Activated naive CD4-positive, alpha-beta T cell treated with anti-CD3 and anti-CD28 coated beads for 36 hours (primary cell): ENCODE measurements at regions of chr12 and their contacts with region 1.

Region 1: GRCh38 chr12:120649442-120650232 is 9.2 kb downstream of the CABP1 start:
- DNase-seq: no peak
- H3K4me3 Mint-ChIP-seq: peak overlapping the region; percentile 20
- H3K27ac Mint-ChIP-seq: no peak overlapping the region
- H3K4me1 Mint-ChIP-seq: peaks cover 12% of the 10 kb centered on the region
- H3K27me3 Mint-ChIP-seq: peaks cover 41% of the 10 kb centered on the region

Region 2: DNA sequence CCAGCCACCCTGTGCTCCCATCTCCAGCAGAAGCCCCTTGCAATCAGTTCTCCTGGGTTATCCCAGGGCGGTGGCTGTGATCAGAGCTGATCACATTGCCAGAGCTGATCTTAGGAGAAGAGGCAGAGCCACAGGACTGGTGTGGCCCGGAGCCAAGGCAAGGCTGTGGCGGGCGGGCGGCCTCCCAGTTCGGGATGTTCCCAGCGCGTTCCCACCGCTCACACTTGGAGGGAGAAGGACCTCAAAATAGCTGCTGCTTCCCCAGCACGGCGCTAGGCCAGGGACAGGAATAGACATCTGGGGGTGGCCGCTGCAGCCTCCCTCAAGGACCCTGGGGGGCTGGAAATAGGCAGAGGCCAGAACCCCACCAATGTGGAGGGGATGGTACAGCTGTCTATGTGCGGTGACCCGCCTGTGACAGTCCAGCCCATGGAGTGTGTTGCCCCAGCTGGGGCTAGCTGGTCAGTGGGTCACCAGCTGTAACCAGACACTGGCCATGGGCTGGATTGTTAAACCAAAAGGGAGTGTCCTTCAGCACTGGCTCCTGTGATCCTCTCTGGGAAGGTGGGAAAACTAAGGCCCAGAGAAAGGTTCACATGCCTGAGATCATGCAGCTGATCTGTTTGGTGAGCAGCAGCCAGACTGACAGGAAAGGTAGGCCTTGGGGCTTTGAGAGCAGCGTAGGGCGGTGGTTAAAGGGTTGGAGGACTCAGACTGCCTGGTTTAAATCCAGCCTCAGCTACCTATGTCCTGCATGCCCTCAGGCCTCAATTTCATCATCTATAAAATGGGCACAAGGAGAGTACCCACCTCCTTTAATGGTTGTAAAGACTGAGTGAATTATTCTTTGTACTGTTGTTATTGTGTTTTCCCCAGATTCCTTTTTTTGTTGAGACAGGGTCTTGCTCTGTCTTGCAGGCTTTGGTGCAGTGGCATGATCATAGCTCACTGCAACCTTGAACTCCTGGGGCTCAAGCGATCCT is 60.4 kb before region 1 on chr12:
- CTCF ChIA-PET with region 1: interaction called, 129 read pairs
- intact Hi-C with region 1: no loop called
- DNase-seq: no peak
- H3K4me3 Mint-ChIP-seq: no peak overlapping the region
- H3K27ac Mint-ChIP-seq: no peak overlapping the region
- H3K4me1 Mint-ChIP-seq: peaks cover under 1% of the 10 kb centered on the region
- H3K27me3 Mint-ChIP-seq: peaks cover 2% of the 10 kb centered on the region

Region 3: DNA sequence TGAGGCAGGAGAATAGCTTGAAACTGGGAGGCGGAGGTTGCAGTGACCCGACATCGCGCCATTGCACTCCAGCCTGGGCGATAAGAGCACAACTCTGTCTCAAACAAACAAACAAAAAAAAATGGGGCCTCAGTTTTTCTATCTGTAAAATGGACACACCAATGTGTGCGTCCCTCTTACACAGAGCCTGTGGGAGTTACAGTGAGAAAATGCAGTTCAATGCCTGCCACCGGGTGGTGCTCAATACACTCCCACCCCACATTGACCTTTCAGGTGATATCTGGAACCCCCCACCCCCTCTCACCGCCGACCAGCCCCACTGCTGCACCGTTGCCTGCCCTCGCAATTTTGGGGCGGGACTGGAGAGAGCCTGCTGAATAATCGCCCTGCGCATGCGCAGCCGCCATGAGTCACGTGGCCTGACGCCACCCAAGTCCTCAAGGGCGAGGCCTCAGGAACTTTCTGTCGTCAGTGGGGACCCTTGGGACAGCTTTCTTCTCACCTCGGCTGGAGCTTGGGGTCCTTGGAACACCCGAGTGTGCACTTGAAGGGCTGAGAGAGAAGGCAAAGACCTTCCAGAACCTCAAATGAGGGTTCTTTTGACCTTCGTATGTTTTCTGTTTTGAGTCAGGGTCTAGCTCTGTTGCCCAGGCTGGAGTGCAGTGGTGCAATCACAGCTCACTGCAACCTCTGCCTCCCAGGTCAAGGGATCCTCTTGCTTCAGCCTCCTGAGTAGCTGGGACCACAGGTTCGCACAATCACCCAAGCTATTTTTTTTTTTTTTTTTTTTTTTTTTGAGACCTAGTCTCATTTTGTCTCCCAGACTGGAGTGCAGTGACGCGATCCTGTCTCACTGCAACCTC is 23.8 kb before region 1 on chr12:
- CTCF ChIA-PET with region 1: interaction called, 16 read pairs
- intact Hi-C with region 1: no loop called
- DNase-seq: peak; percentile 22
- H3K4me3 Mint-ChIP-seq: no peak overlapping the region
- H3K27ac Mint-ChIP-seq: no peak overlapping the region
- H3K4me1 Mint-ChIP-seq: no peaks in the 10 kb centered on the region
- H3K27me3 Mint-ChIP-seq: peaks cover 5% of the 10 kb centered on the region

Region 4: GRCh38 chr12:120677765-120678473 is 28.3 kb after region 1 on chr12:
- CTCF ChIA-PET with region 1: interaction called, 19 read pairs
- intact Hi-C with region 1: no loop called
- DNase-seq: peak; percentile 20
- H3K4me3 Mint-ChIP-seq: no peak overlapping the region
- H3K27ac Mint-ChIP-seq: no peak overlapping the region
- H3K4me1 Mint-ChIP-seq: peaks cover 4% of the 10 kb centered on the region
- H3K27me3 Mint-ChIP-seq: no peaks in the 10 kb centered on the region

Region 5: DNA sequence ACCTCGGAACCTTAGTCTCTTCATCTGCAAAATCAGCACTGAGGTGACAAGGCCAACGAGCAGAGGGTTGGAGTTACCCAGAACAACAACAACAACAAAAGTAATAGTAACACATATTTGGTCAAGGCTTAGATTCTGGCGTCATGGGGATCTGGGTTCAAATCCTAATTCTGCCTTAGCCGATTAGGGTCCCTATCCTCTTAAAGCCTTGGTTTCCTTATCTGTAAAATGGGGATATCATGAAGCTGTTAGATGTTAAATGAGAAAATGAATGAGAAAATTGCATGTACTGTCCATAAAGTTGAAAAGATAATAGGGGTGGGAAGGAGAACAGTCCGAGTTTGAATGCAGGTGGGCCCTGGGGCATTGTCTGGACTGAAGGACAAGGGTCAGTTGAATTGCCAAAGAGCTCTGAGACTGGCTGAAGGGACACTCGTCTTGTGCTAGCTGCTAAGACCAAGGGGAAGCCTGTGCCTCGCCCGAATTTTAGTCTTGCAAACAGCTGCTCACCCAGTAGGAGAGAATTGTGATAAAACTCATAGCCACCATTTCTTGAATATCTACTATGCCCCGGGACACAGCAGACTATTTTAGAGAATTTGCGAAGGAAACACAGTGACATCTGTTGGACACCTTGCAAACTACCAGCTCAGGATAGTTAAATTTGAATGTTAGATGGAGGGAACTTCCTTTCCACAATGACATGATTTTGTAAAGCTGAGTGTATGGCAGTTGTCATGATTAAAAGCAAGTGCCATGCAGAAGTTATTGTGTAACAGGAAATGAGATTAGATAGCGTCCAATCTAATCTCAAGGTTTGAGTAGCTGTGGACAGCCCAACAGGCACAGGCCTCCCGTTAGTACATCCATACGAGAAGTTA is 321.9 kb after region 1 on chr12:
- CTCF ChIA-PET with region 1: interaction called, 48 read pairs
- intact Hi-C with region 1: loop called (anchors 1 kb)
- DNase-seq: peak; percentile 62
- H3K4me3 Mint-ChIP-seq: no peak overlapping the region
- H3K27ac Mint-ChIP-seq: no peak overlapping the region
- H3K4me1 Mint-ChIP-seq: peaks cover 4% of the 10 kb centered on the region
- H3K27me3 Mint-ChIP-seq: no peaks in the 10 kb centered on the region

Region 6: GRCh38 chr12:121110211-121110940 is 460.7 kb after region 1 on chr12:
- CTCF ChIA-PET with region 1: interaction called, 6 read pairs
- intact Hi-C with region 1: loop called (anchors 2 kb)
- DNase-seq: peak; percentile 80
- H3K4me3 Mint-ChIP-seq: no peak overlapping the region
- H3K27ac Mint-ChIP-seq: no peak overlapping the region
- H3K4me1 Mint-ChIP-seq: peaks cover 4% of the 10 kb centered on the region
- H3K27me3 Mint-ChIP-seq: no peaks in the 10 kb centered on the region